Activated naive CD8-positive, alpha-beta T cell treated with anti-CD3 and anti-CD28 coated beads, Interleukin-2, amount 10 ng/mL, durations not matched to agents 7 days and 5 days (primary cell): ENCODE measurements at regions of chr7 and their contacts with region 1.

Region 1: GRCh38 chr7:132437730-132438129 is 138.5 kb downstream of the PLXNA4 start:
- DNase-seq: peak; percentile 68
- ATAC-seq: peak; percentile 76
- H3K4me3 Mint-ChIP-seq: peak overlapping the region; percentile 57
- H3K27ac Mint-ChIP-seq: peak overlapping the region; percentile 84
- H3K4me1 Mint-ChIP-seq: peaks cover 86% of the 10 kb centered on the region
- H3K27me3 Mint-ChIP-seq: no peaks in the 10 kb centered on the region

Region 2: GRCh38 chr7:132333301-132333700 is 104.4 kb before region 1 on chr7:
- POLR2A ChIA-PET with region 1: no interaction called
- DNase-seq: no peak
- ATAC-seq: no peak
- H3K4me3 Mint-ChIP-seq: no peak overlapping the region
- H3K27ac Mint-ChIP-seq: no peak overlapping the region
- H3K4me1 Mint-ChIP-seq: no peaks in the 10 kb centered on the region
- H3K27me3 Mint-ChIP-seq: peaks cover 8% of the 10 kb centered on the region

Region 3: GRCh38 chr7:132455378-132455777 is 17.6 kb after region 1 on chr7:
- POLR2A ChIA-PET with region 1: interaction called, 26 read pairs
- DNase-seq: no peak
- ATAC-seq: peak; percentile 25
- H3K4me3 Mint-ChIP-seq: peak overlapping the region; percentile 34
- H3K27ac Mint-ChIP-seq: peak overlapping the region; percentile 91
- H3K4me1 Mint-ChIP-seq: peaks cover 77% of the 10 kb centered on the region
- H3K27me3 Mint-ChIP-seq: no peaks in the 10 kb centered on the region

Region 4: GRCh38 chr7:132461032-132461592 is 23.4 kb after region 1 on chr7:
- POLR2A ChIA-PET with region 1: interaction called, 24 read pairs
- DNase-seq: no peak
- ATAC-seq: peak; percentile 90
- H3K4me3 Mint-ChIP-seq: peak overlapping the region; percentile 61
- H3K27ac Mint-ChIP-seq: peak overlapping the region; percentile 86
- H3K4me1 Mint-ChIP-seq: peaks cover 60% of the 10 kb centered on the region
- H3K27me3 Mint-ChIP-seq: no peaks in the 10 kb centered on the region